ENCODE measurements at regions of chr5 and their contacts with region 1.

Region 1: GRCh38 chr5:150350524-150351344 is 6.8 kb upstream of the TCOF1 start:
- DNase-seq: peak; percentile 81
- H3K4me3 Mint-ChIP-seq: no peak overlapping the region
- H3K27ac Mint-ChIP-seq: peak overlapping the region; percentile 28
- H3K4me1 Mint-ChIP-seq: peaks cover 8% of the 10 kb centered on the region
- H3K27me3 Mint-ChIP-seq: no peaks in the 10 kb centered on the region

Region 2: GRCh38 chr5:150129813-150130492 is 220.8 kb before region 1 on chr5:
- CTCF ChIA-PET with region 1: interaction called, 3 read pairs
- intact Hi-C with region 1: loop called (anchors 1 kb)
- DNase-seq: peak; percentile 67
- H3K4me3 Mint-ChIP-seq: no peak overlapping the region
- H3K27ac Mint-ChIP-seq: no peak overlapping the region
- H3K4me1 Mint-ChIP-seq: no peaks in the 10 kb centered on the region
- H3K27me3 Mint-ChIP-seq: no peaks in the 10 kb centered on the region

Region 3: DNA sequence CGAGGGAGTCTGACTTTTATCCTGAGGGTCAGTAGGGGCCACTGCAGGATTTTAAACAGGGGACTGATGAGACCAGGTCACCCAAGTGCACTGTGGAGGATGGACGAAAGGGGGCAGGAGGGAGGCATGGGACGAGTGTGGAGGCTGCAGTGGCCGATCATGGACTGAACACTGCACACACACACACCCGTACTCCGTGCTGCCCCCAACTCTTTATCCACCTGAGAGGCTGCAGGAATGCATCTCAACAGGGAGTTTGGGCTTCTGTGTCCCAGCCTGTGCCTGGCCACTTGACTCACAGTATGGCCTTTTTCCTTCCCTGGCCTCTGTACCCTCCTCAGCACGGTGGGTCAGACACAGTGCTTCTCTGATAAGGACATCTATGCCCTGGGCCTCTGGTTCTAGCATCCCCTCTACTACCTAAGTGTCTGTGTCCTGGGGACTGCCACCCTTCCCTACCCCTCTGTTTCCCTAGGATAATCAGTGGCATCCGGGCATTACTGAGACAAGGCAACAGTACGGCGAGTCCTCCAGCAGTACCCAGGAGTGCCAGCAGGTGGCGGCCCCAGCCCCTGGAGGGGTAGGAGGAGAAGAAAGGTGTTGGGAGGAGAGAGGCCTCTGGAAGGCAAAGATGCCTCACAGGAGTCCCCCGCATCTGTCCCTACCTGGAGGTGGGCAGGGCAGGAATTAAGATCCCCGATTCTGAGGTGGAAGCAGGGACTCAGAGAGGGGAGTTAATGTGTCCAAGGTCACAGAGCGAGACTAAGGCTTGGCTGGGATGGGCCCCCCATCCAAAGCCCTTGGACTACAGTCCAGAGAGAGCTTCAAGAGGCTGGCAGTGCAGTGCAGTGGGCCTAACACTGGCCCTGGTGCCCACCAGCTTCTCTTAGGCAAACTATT is 189.2 kb before region 1 on chr5:
- CTCF ChIA-PET with region 1: interaction called, 9 read pairs
- intact Hi-C with region 1: loop called (anchors 2 kb)
- DNase-seq: peak; percentile 87
- H3K4me3 Mint-ChIP-seq: no peak overlapping the region
- H3K27ac Mint-ChIP-seq: no peak overlapping the region
- H3K4me1 Mint-ChIP-seq: no peaks in the 10 kb centered on the region
- H3K27me3 Mint-ChIP-seq: peaks cover 17% of the 10 kb centered on the region

Region 4: GRCh38 chr5:150272526-150272925 is 78.2 kb before region 1 on chr5:
- CTCF ChIA-PET with region 1: no interaction called
- intact Hi-C with region 1: loop called (anchors 1 kb)
- DNase-seq: peak; percentile 32
- H3K4me3 Mint-ChIP-seq: no peak overlapping the region
- H3K27ac Mint-ChIP-seq: no peak overlapping the region
- H3K4me1 Mint-ChIP-seq: no peaks in the 10 kb centered on the region
- H3K27me3 Mint-ChIP-seq: no peaks in the 10 kb centered on the region